Right lobe of liver (tissue), 6 donors: ENCODE measurements at regions of chr14 and their contacts with region 1.

Region 1: GRCh38 chr14:97697772-97698171 is 900.6 kb downstream of the VRK1 start:
- DNase-seq: no peak
- ATAC-seq: no peak
- H3K4me3 ChIP-seq: no peak overlapping the region
- H3K27ac ChIP-seq: no peak overlapping the region
- H3K4me1 ChIP-seq: no peaks in the 10 kb centered on the region
- H3K27me3 ChIP-seq: no peaks in the 10 kb centered on the region
- CTCF ChIP-seq: no peak
- POLR2A ChIP-seq: no peak

Region 2: GRCh38 chr14:97625477-97625876 is 72.3 kb before region 1 on chr14:
- intact Hi-C with region 1: no loop called
- DNase-seq: no peak
- ATAC-seq: no peak
- H3K4me3 ChIP-seq: no peak overlapping the region
- H3K27ac ChIP-seq: no peak overlapping the region
- H3K4me1 ChIP-seq: no peaks in the 10 kb centered on the region
- H3K27me3 ChIP-seq: no peaks in the 10 kb centered on the region
- CTCF ChIP-seq: no peak
- POLR2A ChIP-seq: no peak

Region 3: DNA sequence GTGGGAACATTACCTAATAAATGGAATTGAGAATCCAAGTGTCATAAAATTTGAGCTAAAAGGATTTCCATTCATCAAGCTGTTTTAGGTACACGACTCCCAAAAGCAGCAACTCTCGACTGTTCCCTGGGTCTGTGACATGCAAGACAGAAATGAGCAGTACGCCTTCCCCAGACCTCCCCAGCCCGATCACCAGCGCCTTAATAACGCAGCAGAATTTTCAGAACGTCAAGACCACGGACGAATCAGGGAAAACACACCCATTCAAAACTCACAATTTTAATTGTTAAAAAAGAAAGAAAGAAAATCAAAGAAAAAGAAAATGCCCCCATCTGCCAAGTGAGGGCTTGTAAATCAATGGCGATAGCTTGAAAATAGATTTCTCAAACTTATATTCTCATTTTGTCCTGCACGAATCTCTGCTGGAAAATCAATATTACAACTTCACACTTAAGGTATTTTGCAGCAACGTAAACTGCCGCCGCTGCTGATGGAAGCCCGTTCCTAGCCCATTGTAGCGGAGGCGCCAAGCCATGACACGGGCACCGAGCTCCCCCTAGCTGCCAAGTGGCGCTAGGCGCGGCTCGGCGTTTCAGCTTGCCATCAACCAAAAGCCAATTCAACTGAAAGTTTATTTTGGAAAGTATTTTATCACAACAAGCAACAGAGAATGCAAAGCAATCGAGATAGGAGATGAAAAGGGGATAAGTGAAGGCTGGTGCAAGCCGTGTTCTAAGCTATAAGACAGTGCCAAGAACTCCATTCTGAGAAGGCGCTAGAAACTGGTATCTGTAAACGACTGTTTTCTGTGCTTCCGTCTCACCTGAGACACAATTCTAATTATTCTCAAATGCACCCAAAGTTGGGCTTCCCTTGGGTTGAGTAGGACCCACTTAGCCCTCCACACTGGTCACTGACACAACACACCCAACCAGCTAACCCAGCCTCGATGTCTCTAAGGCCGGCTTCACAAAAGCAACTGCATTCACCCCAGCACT is 1568.7 kb after region 1 on chr14:
- intact Hi-C with region 1: loop called in 1 of 2 experiments (anchors 10 kb)
- DNase-seq: peak; percentile 73 to 80 (median 79)
- ATAC-seq: peak; percentile 90 to 97 (median 94)
- H3K4me3 ChIP-seq: no peak overlapping the region
- H3K27ac ChIP-seq: no peak overlapping the region
- H3K4me1 ChIP-seq: peaks cover 0 to 7% (median under 1%) of the 10 kb centered on the region in 4 donors
- H3K27me3 ChIP-seq: peaks cover 0 to 30% of the 10 kb centered on the region in 2 donors
- CTCF ChIP-seq: peak; percentile 95 to 99 (median 98)
- POLR2A ChIP-seq: no peak